ENCODE measurements at regions of chr2 and their contacts with region 1.

Region 1: GRCh38 chr2:174461221-174461620 is 25.6 kb downstream of the GPR155 start:
- DNase-seq: no peak
- ATAC-seq: no peak

Region 2: DNA sequence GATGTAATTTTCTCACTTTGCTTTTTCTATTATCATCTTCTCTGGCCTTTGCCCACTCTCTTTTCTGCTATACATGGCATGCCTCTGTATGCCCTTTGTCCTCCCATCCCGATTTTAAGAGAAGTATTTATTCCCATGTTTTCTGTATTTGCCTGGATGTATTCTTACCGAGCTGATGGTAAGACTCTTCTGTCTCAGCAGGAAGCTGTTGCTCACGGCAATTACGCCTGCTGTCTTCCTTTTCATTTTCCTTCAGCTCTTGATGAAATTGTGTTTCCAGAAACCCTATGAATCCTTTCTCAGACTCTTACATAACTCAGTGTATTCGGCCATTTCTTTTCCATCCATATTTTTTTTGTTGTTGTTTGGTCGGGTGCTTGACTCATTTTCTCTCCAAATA is 617.7 kb before region 1 on chr2:
- intact Hi-C with region 1: no loop called
- DNase-seq: no peak
- ATAC-seq: no peak

Region 3: GRCh38 chr2:174428214-174428613 is 33.0 kb before region 1 on chr2:
- intact Hi-C with region 1: no loop called
- DNase-seq: no peak
- ATAC-seq: no peak

Region 4: DNA sequence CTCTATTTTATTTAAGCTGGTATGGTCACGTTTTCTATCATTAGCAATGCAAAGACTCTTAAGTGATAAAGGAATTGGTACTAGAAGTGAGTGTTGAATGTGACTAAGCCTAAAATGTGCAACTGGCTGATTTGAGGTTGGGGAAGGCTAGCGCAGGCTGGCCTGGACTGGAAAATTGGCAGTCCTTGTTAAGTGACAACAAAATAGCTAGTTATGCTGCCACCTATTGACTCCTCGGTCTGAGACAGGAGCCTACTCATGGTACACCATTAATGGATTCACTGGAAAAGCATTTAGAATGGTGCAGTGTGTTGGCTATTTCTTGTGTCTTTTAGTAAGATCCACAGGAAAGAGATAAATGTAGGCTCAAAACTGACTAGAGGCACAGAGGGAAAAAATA is 142.1 kb after region 1 on chr2:
- intact Hi-C with region 1: loop called (anchors 5 kb)
- DNase-seq: peak; percentile 56
- ATAC-seq: peak; percentile 91

Region 5: DNA sequence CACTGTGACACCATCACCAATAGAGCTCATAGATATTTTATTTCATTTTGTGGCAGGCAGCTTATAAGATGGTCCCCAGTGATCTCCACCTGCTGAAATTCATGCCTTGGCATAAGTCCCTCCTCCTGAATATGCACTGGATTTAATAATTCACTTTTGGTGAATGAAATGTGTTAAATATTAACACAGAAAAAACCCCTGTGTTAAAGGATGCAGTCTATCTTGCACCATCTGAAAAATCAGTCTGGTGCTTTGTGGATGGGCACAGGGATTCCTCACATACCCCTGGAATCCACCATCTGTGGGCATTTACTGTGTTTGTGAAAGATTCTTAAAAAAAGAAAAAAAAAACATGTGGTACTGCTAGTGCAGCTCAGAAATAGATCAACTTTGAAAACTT is 162.5 kb after region 1 on chr2:
- intact Hi-C with region 1: no loop called
- DNase-seq: no peak
- ATAC-seq: no peak

Region 6: GRCh38 chr2:174688079-174688478 is 226.9 kb after region 1 on chr2:
- intact Hi-C with region 1: loop called (anchors 5 kb)
- DNase-seq: no peak
- ATAC-seq: peak; percentile 41

Region 7: GRCh38 chr2:175282290-175282689 is 821.1 kb after region 1 on chr2:
- intact Hi-C with region 1: no loop called
- DNase-seq: no peak
- ATAC-seq: peak; percentile 77

Measured in Right ventricle myocardium superior (tissue), 1 donor.